ENCODE measurements at regions of chr21 and their contacts with region 1.

Region 1: DNA sequence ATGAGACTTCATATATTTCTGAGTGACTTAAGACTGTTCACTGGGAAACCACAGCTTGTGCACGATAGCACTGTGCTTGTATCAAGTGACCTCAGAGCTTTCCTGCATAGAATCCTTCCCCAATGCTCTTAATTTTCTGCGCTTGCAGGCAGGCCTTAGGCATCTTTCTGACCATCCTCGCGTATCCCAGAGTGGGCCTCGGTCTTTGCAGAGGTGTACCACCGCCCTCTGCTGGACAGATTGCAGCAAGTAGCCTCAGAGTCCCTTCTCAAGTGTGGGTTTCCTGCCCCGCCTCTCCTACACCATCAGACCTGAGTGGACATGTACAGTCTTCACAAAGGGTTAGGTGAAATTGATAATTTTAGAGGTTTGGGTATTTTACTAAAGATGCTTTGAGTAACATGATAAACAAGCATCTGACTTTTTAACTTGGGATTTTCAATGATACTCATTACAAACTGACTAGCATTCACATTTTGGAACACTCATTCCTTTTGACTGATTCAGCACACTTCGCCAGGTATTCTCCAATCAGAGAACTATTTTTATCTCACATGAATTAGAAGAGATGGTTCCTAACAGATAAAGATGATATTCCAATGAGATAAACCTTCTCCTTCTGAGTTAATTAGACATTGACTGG is 246.5 kb upstream of the USP25 start:
- DNase-seq: peak; percentile 57
- H3K4me3 ChIP-seq: peak overlapping the region in 1 of 2 experiments; percentile 35; a peak in 1 of 4 replicates
- H3K27ac ChIP-seq: no peak overlapping the region
- H3K4me1 ChIP-seq: no peaks in the 10 kb centered on the region
- H3K27me3 ChIP-seq: no peaks in the 10 kb centered on the region; the same call in 1 of the 2 replicates
- CTCF ChIP-seq: peak; percentile 88
- EP300 ChIP-seq: no peak
- RAD21 ChIP-seq: peak; percentile 88

Region 2: DNA sequence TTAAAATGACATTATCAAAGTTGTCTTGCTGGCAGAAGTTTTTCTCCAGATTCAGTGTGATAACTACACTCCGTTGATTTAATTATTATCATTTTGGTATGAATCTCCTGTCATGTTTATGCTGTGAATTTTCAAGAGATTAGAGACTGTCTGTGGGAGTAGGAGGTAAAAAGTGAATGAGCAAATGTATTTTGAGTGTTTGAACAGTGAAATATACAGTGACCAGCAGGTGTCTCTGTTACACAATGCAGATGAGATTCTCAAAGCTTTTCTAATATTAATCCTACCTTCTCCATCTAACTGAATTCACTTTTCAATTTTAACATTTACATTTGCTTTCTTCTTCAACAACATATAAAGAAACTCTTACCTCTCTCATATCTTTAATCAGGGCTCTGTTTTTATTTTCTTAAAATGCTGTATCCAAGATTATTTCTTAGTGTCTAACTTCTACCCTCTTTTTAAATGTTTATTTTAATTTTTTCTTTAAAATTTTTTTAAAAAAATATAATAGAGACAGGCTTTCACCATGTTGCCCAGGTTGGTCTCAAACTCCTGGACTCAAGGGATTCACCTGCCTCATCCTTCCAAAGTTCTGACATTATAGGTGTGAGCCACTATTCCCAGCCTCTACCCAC is 1079.5 kb before region 1 on chr21:
- CTCF ChIA-PET with region 1: interaction called, 11 read pairs
- POLR2A ChIA-PET with region 1: no interaction called
- DNase-seq: peak; percentile 24
- H3K4me3 ChIP-seq: no peak overlapping the region
- H3K27ac ChIP-seq: no peak overlapping the region
- H3K4me1 ChIP-seq: no peaks in the 10 kb centered on the region
- H3K27me3 ChIP-seq: no peaks in the 10 kb centered on the region
- CTCF ChIP-seq: peak; percentile 71
- EP300 ChIP-seq: no peak
- RAD21 ChIP-seq: peak; percentile 71

Region 3: DNA sequence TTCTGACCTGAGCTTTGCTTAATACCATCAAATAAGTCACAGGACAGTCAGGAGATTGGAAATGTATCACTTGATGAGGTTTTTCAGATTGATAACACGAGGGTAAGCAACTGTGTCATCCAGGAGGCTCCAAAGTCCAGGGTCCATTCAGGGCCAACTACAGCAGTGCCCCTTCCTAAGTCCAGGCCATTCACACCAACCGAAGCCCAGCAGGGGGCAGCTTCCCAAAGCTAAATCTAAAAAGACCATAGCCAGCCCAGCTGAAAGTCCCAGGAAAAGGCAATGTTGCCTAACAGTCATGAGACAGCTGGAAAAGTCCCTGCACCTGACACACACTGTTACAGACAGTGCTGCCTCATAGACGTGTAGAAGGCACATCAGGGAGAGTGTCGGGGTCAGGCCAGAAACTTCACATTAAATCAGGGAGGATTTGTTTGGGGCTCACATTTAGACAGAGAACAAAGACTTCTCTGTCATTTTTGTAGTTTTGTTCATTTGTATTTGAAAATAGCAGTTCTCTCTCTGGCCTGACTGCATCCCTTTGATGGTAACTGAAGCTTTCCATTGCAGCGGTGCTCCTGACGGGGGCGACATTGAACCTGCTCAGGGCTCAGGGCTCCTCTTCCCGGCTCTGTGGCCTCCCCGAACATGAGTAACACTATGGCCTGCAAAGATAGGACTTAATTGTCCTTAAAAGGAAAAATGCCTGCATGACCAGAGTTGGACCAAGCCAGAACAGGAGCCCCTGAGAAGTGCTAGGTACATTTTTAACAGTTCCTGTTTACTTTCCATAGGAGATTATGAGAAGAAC is 618.8 kb before region 1 on chr21:
- CTCF ChIA-PET with region 1: interaction called, 13 read pairs
- POLR2A ChIA-PET with region 1: no interaction called
- DNase-seq: peak; percentile 12
- H3K4me3 ChIP-seq: peak overlapping the region in 1 of 2 experiments; percentile 46; a peak in 1 of 4 replicates
- H3K27ac ChIP-seq: no peak overlapping the region
- H3K4me1 ChIP-seq: no peaks in the 10 kb centered on the region
- H3K27me3 ChIP-seq: no peaks in the 10 kb centered on the region; the same call in 1 of the 2 replicates
- CTCF ChIP-seq: peak; percentile 49
- EP300 ChIP-seq: no peak
- RAD21 ChIP-seq: peak; percentile 43

Region 4: GRCh38 chr21:15462092-15462491 is 21.2 kb before region 1 on chr21:
- CTCF ChIA-PET with region 1: interaction called, 11 read pairs
- POLR2A ChIA-PET with region 1: no interaction called
- DNase-seq: no peak
- H3K4me3 ChIP-seq: no peak overlapping the region
- H3K27ac ChIP-seq: no peak overlapping the region
- H3K4me1 ChIP-seq: no peaks in the 10 kb centered on the region
- H3K27me3 ChIP-seq: no peaks in the 10 kb centered on the region
- CTCF ChIP-seq: no peak
- EP300 ChIP-seq: no peak
- RAD21 ChIP-seq: no peak

Region 5: DNA sequence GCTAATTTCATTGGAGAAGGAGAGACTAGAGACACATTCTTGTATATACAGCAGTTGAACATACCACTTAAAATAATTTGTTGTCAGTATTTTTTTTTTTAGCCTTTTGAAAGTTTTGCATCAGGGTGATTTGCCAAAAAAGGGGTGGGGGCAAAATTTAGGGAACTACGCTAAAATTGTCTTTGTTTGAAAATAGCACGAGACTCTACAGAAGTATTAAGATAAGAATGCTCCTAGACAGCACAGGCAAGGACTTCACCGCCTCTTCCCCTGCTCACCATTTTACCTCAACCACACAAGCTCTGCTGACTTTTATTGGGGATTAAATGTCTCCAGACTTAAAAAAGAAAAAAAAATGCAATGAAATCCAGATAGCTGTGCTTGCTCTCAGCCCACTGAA is 10.4 kb after region 1 on chr21:
- CTCF ChIA-PET with region 1: interaction called, 21 read pairs
- POLR2A ChIA-PET with region 1: no interaction called
- DNase-seq: no peak
- H3K4me3 ChIP-seq: no peak overlapping the region
- H3K27ac ChIP-seq: no peak overlapping the region
- H3K4me1 ChIP-seq: no peaks in the 10 kb centered on the region
- H3K27me3 ChIP-seq: no peaks in the 10 kb centered on the region
- CTCF ChIP-seq: no peak
- EP300 ChIP-seq: no peak
- RAD21 ChIP-seq: no peak

Region 6: GRCh38 chr21:15543473-15543872 is 60.2 kb after region 1 on chr21:
- CTCF ChIA-PET with region 1: no interaction called
- POLR2A ChIA-PET with region 1: no interaction called
- DNase-seq: no peak
- H3K4me3 ChIP-seq: no peak overlapping the region
- H3K27ac ChIP-seq: no peak overlapping the region
- H3K4me1 ChIP-seq: no peaks in the 10 kb centered on the region
- H3K27me3 ChIP-seq: no peaks in the 10 kb centered on the region
- CTCF ChIP-seq: no peak
- EP300 ChIP-seq: no peak
- RAD21 ChIP-seq: no peak